AG04449 (cell line): ENCODE measurements at regions of chr17 and their contacts with region 1.

Region 1: DNA sequence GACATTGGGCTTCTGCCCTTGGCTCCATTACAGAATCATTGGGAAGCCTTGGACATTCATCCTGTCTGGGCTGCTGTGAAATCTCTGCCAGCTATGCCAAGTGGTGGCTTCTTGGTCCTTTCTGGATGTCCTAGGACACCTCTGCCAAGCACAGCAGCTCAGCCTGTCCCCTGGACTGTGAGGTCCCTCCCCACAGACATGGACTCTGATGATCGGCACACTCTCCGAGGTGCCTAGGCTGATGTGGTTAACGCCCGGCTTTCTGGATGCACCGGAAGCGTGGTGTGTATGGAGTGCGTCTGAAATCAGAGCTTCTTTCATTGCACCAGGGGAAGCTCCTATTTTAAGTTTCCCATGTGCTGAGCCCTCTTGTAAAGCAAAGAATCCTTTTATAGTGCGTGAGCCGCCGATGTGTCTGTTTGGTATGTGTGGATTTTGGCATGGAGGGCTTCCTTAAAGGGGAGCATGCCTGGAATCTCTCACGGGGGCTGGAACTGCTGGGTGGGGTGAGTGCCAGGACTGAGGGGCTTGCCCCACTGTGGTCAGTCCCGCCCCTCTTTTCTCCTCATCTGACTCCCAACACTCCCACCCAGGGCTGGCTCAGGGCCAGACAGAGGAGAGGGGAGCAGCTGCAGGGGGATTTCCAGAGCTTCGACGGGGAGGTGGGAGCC is 7.0 kb upstream of the ARHGAP23 start:
- DNase-seq: peak; percentile 78
- H3K4me3 ChIP-seq: peak overlapping the region; percentile 20
- CTCF ChIP-seq: no peak

Region 2: GRCh38 chr17:38434178-38434665 is 12.9 kb after region 1 on chr17:
- CTCF ChIA-PET with region 1: interaction called, 15 read pairs
- POLR2A ChIA-PET with region 1: no interaction called
- DNase-seq: no peak
- H3K4me3 ChIP-seq: no peak overlapping the region
- CTCF ChIP-seq: no peak

Region 3: DNA sequence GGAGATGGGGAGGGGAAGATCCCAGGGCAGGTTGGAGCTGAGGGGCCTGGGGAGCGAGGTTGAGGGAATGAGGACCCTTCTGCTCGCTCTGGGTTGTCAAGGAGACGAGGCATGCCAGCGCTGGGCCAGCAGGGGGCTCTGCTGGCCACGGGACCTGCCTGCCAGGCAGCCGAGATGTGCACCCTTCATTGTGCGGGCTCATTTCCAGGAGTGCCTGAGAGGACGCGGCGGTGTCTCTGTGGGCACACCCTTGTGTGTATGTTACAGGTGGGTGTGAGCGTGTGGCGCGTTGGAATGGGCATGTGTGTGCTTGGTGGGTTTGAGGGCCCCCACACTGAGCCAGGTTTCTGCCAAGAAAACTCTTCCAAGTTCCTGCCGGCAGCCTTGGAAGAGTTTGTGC is 22.8 kb after region 1 on chr17:
- CTCF ChIA-PET with region 1: interaction called, 13 read pairs
- POLR2A ChIA-PET with region 1: no interaction called
- DNase-seq: no peak
- H3K4me3 ChIP-seq: no peak overlapping the region
- CTCF ChIP-seq: peak; percentile 97

Region 4: GRCh38 chr17:38454516-38454915 is 33.2 kb after region 1 on chr17:
- CTCF ChIA-PET with region 1: interaction called, 11 read pairs
- POLR2A ChIA-PET with region 1: interaction called, 9 read pairs
- DNase-seq: no peak
- H3K4me3 ChIP-seq: peak overlapping the region; percentile 77
- CTCF ChIP-seq: no peak

Region 5: DNA sequence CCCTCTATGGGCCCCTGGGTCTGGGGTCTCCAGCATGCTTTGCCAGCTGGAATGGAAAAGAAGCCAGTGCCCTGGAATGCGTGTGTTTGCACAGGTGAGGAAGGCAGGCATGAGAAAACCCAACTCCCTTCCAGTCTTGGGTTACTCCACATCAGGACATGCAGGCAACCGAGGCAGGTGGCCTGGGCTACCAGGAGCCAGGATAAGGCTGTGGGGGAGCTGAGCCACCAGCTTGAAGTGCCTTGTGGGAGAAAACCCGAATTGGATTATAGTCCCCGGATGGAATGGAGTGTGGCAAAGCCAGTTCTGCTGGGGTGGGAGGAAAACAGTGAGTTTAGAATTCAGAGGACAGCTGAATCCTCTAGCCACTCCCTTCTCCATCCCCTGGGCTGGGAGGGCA is 177.2 kb after region 1 on chr17:
- CTCF ChIA-PET with region 1: no interaction called
- POLR2A ChIA-PET with region 1: no interaction called
- DNase-seq: no peak
- H3K4me3 ChIP-seq: no peak overlapping the region
- CTCF ChIP-seq: no peak

Region 6: DNA sequence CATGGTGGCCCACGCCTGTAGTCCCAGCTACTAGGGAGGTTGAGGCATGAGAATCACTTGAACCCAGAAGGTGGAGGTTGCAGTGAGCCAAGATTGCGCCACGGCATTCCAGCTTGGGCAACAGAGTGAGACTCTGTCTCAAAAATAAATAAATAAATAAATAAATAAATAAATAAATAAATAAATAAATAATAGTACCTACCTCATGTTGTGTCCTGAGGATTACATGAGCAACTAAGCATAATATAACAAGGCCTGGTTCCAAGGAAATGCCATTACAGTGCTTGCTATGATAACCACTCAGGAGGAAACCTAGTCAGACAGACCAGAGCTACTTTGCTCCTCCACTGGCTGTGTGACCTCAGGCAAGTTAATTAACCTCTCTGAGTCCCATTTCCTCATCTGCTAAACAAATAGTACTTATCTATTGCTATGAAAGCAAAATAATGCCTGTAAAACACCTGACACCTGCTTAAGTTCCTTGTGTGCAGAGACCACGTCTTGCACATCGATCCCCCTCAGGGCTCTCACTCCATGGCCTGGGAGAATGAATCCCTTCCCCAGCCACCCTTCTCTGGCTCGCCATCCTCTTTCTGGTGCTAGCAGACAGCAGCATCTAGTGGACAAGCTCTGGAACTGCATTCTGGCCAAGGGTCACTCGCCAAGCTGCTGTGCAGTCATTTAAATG is 245.9 kb after region 1 on chr17:
- CTCF ChIA-PET with region 1: interaction called, 32 read pairs
- POLR2A ChIA-PET with region 1: no interaction called
- DNase-seq: no peak
- H3K4me3 ChIP-seq: no peak overlapping the region
- CTCF ChIP-seq: peak; percentile 98